Common myeloid progenitor, CD34-positive (primary cell): ENCODE measurements at regions of chr2 and their contacts with region 1.

Region 1: DNA sequence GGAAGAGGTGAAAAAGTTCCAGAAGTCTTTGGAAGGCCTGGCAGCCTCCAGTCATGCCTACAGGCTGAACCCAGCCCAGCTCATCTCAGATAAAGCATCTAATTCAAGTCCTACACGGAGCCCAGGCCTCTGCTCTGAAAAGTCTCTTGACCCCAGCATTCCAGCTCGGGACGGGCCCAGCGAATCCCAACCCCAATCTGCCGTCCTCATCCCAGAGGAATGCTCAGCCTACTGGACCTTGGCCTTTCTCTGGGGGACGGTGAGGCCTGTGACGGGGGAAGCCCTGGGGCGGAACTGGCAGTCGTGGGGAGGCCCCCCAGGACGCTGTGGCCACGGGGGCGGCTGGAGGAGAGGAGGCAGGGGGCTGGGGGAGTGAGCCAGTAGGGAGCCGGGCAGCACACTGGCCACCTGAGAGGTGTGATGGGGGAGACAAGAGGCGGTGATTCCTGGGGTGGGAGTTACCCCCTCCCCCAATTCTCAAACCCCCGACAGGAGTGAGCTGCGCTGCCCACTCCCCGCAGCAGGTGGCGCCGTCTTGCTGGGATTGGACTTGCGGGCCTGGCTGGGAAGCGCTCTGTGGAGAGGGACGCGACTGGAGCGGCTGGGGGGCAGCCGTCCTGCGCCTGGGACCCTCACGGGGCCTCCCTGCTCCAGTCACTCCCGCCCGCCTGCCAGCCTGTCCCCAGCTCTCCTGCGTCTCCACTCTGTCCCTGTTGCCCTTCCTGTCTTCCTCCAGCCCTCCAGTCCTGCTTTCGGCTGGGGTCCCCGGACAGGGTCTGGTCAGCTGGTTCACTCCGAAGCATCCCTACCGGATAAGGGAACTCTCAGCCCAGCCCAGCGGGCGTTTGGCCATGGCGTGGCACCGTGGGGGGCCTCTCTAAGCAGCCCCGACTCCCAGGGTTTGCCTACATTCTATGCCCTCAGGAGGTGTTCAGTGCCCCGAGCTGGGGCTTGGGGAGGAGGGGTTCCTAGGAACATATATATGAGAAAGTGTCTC is 182.6 kb upstream of the HAAO start:
- DNase-seq: peak; percentile 57 to 77 (median 76)
- H3K4me3 ChIP-seq: peak overlapping the region in 4 of 7 experiments; percentile 40 to 65 (median 62)
- H3K27ac ChIP-seq: peak overlapping the region in 1 of 2 experiments; percentile 66
- H3K4me1 ChIP-seq: peaks cover 0 to 93% (median 75%) of the 10 kb centered on the region in 4 experiments
- H3K27me3 ChIP-seq: no peaks in the 10 kb centered on the region

Region 2: GRCh38 chr2:42859006-42859552 is 115.9 kb before region 1 on chr2:
- CTCF ChIA-PET with region 1: interaction called, 15 read pairs
- POLR2A ChIA-PET with region 1: no interaction called
- DNase-seq: peak; percentile 84 to 93 (median 89)
- H3K4me3 ChIP-seq: no peak overlapping the region
- H3K27ac ChIP-seq: no peak overlapping the region
- H3K4me1 ChIP-seq: peaks cover 2 to 57% (median 45%) of the 10 kb centered on the region in 4 experiments
- H3K27me3 ChIP-seq: no peaks in the 10 kb centered on the region

Region 3: DNA sequence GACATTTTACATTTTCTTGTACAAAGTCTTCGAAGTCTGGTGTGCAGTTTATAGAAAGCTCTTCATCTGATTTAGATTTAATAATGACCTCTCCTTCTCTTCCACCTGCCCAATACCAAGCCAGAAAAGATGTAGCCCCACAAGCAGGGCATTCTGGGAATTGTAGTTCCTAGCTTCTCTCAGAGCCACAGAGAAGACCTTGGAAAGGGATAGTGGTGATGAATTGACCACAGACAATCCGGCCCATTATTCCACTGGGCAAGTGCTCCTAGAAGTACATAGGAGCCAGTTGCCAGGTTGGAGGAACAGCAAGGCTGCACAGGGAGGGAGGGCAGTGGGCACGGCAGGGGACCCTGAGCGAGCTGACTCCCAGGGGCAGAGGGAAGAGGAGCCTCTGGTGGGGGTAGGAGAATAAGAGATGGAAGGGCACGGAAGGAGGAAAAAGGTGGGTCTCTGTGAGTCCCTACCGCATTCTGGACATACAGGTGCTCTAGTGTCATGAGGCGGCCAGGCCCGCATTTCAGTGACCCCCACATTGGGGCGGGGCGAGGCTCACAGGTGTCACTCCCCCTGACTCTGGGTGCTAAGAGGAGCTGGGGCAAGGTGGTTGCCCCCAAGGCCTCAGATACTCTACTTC is 30.1 kb before region 1 on chr2:
- CTCF ChIA-PET with region 1: interaction called, 87 read pairs
- POLR2A ChIA-PET with region 1: interaction called, 3 read pairs
- DNase-seq: peak in 1 of 3 donors; percentile 2
- H3K4me3 ChIP-seq: no peak overlapping the region
- H3K27ac ChIP-seq: peak overlapping the region in 1 of 2 experiments; percentile 2
- H3K4me1 ChIP-seq: peaks cover 7 to 68% (median 57%) of the 10 kb centered on the region in 4 experiments
- H3K27me3 ChIP-seq: no peaks in the 10 kb centered on the region

Region 4: DNA sequence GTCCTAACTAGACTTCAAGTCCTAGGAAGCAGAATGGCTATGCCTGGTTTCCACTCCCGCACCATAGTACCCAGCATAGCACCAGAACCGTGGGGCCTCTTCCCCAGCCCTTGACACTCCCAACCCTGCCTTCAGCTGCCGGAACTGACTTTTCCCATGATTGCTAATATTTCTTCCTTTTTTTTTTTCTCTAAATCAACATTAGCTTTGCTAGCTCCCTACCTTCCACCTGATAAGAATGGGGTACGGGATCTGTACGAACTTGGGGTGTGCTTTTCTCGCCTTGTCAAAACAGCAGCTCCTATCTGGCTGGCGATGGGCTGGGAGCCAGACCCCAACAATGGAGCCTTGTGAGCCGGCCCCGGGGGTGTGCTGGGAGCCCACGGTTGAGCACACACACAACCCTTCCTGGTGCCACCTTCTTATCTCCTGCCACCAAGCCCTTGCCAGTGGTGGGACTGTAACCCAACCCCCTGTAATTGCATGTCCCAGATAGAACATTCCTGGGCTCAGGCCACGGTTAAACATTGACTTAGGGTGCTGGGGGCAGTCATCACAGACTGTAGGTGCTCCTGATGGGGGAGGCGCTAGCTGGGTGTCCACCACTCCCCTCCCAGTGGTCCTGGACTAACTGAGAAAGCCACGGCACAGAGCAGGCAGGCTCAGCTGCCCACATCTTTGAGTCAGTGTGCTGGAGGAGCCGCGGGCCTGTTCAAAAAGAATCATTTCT is 30.4 kb after region 1 on chr2:
- CTCF ChIA-PET with region 1: interaction called, 12 read pairs
- POLR2A ChIA-PET with region 1: interaction called, 4 read pairs
- DNase-seq: peak; percentile 57 to 85 (median 70)
- H3K4me3 ChIP-seq: peak overlapping the region; percentile 30 to 79 (median 65)
- H3K27ac ChIP-seq: peak overlapping the region; percentile 60 to 78
- H3K4me1 ChIP-seq: peaks cover 2 to 47% (median 37%) of the 10 kb centered on the region in 4 experiments
- H3K27me3 ChIP-seq: no peaks in the 10 kb centered on the region

Region 5: GRCh38 chr2:43131024-43131889 is 156.2 kb after region 1 on chr2:
- CTCF ChIA-PET with region 1: interaction called, 18 read pairs
- POLR2A ChIA-PET with region 1: interaction called, 3 read pairs
- DNase-seq: peak; percentile 94 to 100 (median 98)
- H3K4me3 ChIP-seq: peak overlapping the region in 2 of 7 experiments; percentile 4 to 40
- H3K27ac ChIP-seq: peak overlapping the region; percentile 51 to 71
- H3K4me1 ChIP-seq: peaks cover 31 to 91% (median 88%) of the 10 kb centered on the region in 4 experiments
- H3K27me3 ChIP-seq: no peaks in the 10 kb centered on the region

Region 6: GRCh38 chr2:43226558-43226954 is 251.5 kb after region 1 on chr2 and contains the start of gene ZFP36L2:
- CTCF ChIA-PET with region 1: interaction called, 79 read pairs
- POLR2A ChIA-PET with region 1: interaction called, 75 read pairs
- DNase-seq: peak; percentile 94 to 97 (median 96)
- H3K4me3 ChIP-seq: peak within 1 kb of the TSS; percentile 84 to 100 (median 97)
- H3K27ac ChIP-seq: peak within 1 kb of the TSS; percentile 61 to 91
- H3K4me1 ChIP-seq: peaks cover 22 to 29% (median 27%) of the 10 kb centered on the region in 4 experiments
- H3K27me3 ChIP-seq: no peaks in the 10 kb centered on the region

Region 7: GRCh38 chr2:43251171-43251731 is 276.2 kb after region 1 on chr2:
- CTCF ChIA-PET with region 1: no interaction called
- POLR2A ChIA-PET with region 1: no interaction called
- DNase-seq: no peak
- H3K4me3 ChIP-seq: no peak overlapping the region
- H3K27ac ChIP-seq: no peak overlapping the region
- H3K4me1 ChIP-seq: peaks cover 0 to 6% (median 2%) of the 10 kb centered on the region in 4 experiments
- H3K27me3 ChIP-seq: no peaks in the 10 kb centered on the region